MCF 10A (cell line): ENCODE measurements at regions of chr2 and their contacts with region 1.

Region 1: GRCh38 chr2:225270861-225271260 is 128.6 kb upstream of the NYAP2 start:
- DNase-seq: peak; percentile 94
- H3K4me3 Mint-ChIP-seq: no peak overlapping the region
- H3K27ac Mint-ChIP-seq: no peak overlapping the region
- H3K4me1 Mint-ChIP-seq: peaks cover 11% of the 10 kb centered on the region
- H3K27me3 Mint-ChIP-seq: no peaks in the 10 kb centered on the region
- CTCF ChIP-seq: peak; percentile 5

Region 2: DNA sequence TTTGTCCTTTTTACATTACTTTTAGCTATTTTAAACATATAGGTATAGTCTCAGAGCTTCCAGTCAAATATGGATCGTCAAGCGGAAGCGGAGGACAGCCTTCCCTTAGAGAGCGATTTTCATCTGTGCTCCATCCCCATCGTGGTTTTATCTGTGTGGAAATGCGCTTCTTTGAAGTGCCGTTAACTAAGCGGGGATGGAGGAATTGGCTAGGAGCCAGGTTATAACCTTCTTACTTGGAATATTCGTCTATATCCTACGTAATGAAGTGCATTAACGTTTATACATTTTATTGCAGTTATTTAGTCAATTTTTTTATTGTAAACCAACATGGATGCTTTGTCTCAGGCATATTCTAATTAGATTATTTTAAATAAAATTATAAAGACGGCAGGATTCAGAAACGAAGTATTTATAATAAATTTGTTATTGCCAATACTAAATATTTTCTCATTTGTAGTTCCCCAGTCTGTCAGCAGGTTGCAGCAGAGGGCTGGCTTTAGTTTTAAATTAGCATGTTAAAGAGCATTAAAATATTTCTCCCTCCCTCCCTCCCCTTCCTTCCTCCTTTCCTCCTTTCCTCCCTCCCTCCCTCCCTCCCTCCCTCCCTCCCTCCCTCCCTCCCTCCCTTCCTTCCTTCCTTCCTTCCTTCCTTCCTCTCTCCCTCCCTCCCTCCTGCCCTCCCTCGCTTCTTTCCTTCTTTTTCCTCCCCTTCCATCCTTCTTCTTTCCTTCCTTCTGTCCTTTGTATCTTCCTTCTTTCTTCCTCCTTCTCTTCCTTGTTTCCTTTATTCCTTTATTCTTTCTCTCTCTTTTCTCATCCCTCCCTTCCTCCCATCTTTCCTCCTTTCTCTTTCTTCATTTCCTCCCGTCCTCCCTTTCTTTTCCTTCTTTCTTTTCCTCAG is 148.0 kb before region 1 on chr2:
- CTCF ChIA-PET with region 1: interaction called, 7 read pairs
- POLR2A ChIA-PET with region 1: no interaction called
- intact Hi-C with region 1: loop called (anchors 10 kb)
- DNase-seq: peak; percentile 45
- H3K4me3 Mint-ChIP-seq: no peak overlapping the region
- H3K27ac Mint-ChIP-seq: no peak overlapping the region
- H3K4me1 Mint-ChIP-seq: peaks cover 12% of the 10 kb centered on the region
- H3K27me3 Mint-ChIP-seq: no peaks in the 10 kb centered on the region
- CTCF ChIP-seq: peak; percentile 58